Right ventricle myocardium inferior (tissue), 1 donor: ENCODE measurements at regions of chr1 and their contacts with region 1.

Region 1: GRCh38 chr1:186212544-186213226 is 162.4 kb downstream of the TPR start:
- DNase-seq: no peak
- ATAC-seq: peak; percentile 88

Region 2: DNA sequence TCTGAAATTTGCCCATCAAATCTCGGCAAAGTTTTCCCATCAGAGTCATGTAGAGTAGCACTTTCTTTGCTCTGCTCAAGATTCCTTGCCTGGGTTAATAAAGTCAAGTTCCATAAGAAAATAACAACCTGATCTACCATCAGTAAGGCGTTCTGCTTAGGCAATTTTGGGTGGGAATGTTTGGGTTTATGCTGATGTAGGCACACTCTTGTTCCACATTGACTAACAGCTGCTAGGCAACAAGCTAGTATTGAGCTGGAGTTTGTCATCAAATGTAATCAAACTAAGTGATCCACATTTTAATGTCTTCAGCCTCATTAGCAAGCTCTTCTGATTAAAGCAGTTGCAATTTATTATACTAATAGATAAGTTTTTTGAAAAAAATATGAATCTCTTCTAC is 490.6 kb before region 1 on chr1:
- intact Hi-C with region 1: loop called (anchors 2 kb)
- DNase-seq: no peak
- ATAC-seq: no peak

Region 3: DNA sequence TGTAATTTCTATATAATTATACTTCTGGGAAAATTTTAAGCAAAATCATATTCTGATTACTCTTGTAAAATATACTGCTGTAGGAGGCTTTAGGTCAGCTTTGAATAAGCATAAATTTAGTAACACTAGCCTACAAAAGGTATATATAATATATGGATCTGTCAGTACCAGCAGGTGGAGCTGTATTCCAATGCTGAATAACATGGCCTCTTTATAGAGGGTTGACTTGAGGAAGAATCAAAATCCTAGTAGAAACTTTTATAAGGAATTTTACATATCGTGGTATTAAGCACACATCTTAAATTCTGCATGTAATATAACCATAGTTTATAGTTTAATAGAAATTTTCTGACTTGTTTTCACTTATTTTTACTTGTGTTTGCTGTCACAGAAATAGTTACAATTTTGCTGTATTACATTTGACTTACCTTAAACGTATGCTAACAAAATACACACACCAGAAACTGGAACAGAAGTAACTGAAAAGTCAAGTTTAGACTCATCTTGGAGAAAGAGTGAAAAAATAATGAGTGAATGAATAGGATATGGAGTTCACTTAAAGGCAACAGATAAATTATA is 399.2 kb before region 1 on chr1:
- intact Hi-C with region 1: loop called (anchors 5 kb)
- DNase-seq: no peak
- ATAC-seq: no peak

Region 4: GRCh38 chr1:186152620-186153361 is 59.9 kb before region 1 on chr1:
- intact Hi-C with region 1: loop called (anchors 5 kb)
- DNase-seq: no peak
- ATAC-seq: no peak